ENCODE measurements at regions of chr21 and their contacts with region 1.

Region 1: DNA sequence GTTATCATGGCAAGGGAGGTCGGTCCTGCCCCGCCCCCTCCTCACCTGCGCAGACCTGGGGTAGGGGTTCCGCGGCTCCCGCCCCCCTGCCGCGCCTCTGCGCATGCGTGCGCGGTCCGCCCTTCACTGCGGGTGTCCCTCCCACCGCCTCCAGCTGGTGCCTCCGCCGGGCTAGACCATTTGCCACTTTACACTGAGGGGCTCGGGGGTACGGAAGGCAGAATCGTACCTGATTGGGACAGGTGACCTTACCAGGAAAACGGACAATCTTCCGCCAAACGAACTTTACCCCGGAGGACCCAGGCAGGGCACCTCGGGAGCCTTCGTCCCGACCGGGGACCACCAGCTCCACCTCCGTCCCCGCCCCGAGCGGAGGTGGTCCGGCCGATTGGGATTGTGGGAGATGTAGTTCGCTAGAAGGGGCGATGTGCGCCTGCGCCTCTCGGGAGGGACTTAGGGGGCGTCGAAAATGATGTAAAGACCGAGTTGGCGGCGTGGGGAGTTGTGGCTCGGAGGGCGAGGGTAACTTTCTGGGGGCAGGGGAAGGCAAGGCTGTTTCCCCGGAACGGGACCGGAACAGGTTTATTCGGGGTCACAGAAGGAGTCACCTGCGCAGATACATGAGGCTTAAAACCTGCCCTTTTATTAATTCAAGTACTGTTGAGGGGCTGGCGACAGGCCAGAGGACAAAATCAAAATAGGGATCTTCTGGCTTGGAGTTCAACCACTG is at the start of gene DNAJC28:
- DNase-seq: peak; percentile 97

Region 2: DNA sequence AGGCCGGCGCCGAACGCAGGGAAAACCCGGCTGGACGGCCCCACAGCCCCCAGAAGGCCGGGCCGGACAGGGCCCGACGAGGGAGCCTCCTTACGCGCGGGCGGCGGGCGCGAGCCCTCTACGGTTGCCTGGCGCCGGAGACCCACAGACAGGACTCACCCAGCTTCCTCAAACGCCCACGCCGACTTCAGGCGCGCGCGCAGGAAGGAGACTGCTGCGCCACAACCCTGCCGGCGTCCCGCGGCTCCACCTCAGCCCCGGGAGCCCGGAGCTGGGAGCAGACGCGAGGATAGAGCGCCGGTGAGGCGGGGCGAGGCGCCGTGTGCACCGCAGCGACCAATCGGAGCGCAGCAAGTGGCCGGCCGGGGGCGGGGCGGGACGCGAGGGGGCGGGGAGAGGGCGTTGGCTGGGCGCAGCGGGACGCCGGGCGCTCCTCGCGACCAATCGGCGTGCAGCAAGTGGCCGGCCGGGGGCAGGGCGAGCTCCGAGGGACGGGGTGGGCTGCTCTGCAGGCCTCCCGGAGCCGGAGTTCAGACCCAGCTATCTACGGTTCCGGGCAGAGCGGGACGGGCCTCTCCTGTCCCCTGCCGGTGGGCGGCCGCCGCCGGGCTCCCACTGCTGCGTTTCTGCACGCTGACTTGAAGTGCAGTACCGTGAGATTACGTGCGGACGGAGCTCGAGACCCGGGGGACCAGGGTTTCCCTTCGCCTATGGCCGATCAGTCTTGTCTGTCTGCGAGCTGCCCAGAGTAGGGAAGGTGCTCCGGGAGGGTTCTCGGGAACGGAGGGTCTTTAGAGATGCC is 11.7 kb before region 1 on chr21 and contains the start of gene TMEM50B:
- CTCF ChIA-PET with region 1: interaction called, 11 read pairs
- POLR2A ChIA-PET with region 1: interaction called, 42 read pairs
- DNase-seq: peak; percentile 97

Region 3: GRCh38 chr21:33531007-33531406 is 39.5 kb after region 1 on chr21:
- CTCF ChIA-PET with region 1: no interaction called
- POLR2A ChIA-PET with region 1: no interaction called
- DNase-seq: no peak